AG04450 (cell line): ENCODE measurements at regions of chr22 and their contacts with region 1.

Region 1: DNA sequence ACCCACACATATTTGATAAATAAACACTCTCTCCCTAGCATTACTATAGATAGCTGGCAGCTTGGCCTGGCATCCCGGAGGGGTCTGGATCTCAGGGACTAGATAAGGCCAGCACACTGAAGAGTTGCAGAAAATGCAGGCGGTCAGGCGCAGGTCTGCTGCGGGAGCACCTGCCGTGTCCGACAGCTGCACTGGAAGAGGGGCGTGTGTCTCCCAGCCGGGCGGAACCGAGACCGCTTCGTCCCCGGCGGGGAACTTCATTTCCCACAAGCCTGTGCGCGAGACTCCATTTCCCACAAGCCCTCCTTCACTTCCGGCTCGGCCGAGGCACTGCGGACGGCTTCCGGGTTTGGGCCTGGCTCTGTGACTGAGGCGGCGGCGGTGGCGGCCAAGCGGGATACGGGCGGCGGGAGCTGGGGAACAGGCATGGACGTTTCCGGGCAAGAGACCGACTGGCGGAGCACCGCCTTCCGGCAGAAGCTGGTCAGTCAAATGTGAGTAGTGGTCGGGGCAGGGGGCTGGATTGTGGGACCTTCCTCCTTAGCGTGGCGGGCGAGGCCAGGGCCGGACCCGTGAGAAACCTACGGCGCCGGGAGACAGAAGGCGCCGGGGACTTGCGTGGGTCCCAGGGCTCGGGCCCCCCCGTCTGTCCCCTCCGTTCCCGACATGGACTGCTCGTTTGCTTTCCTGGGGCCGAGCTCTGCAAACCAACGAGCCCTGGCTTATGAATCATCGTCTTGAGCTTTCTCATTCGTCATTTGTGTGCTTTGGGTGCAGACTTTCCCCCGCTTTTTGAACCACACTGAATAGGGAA is at the start of gene MED15:
- DNase-seq: peak; percentile 65
- H3K4me3 ChIP-seq: peak within 1 kb of the TSS; percentile 97
- H3K27ac ChIP-seq: peak within 1 kb of the TSS; percentile 97
- H3K27me3 ChIP-seq: no peaks in the 10 kb centered on the region
- CTCF ChIP-seq: no peak
- polyA plus RNA-seq, gene MED15: 17.3 and 25.4 TPM in 2 replicates

Region 2: GRCh38 chr22:20531315-20532201 is 24.1 kb after region 1 on chr22:
- CTCF ChIA-PET with region 1: interaction called, 3 read pairs
- POLR2A ChIA-PET with region 1: interaction called, 16 read pairs
- DNase-seq: no peak
- H3K4me3 ChIP-seq: no peak overlapping the region
- H3K27ac ChIP-seq: peak overlapping the region; percentile 95
- H3K27me3 ChIP-seq: no peaks in the 10 kb centered on the region
- CTCF ChIP-seq: no peak